HepG2 (cell line): ENCODE measurements at regions of chr9 and their contacts with region 1.

Region 1: GRCh38 chr9:132026932-132027585 is 52.6 kb downstream of the MED27 start:
- DNase-seq: no peak
- ATAC-seq: no peak
- H3K4me3 ChIP-seq: no peak overlapping the region
- H3K27ac ChIP-seq: no peak overlapping the region
- H3K4me1 ChIP-seq: peaks cover under 1% of the 10 kb centered on the region; the same call in 1 of the 2 replicates
- H3K27me3 ChIP-seq: no peaks in the 10 kb centered on the region
- CTCF ChIP-seq: no peak
- EP300 ChIP-seq: no peak
- POLR2A ChIP-seq: no peak
- RAD21 ChIP-seq: no peak

Region 2: GRCh38 chr9:131960871-131961495 is 66.1 kb before region 1 on chr9:
- CTCF ChIA-PET with region 1: no interaction called
- POLR2A ChIA-PET with region 1: no interaction called
- in situ Hi-C with region 1: loop called (anchors 10 kb)
- intact Hi-C with region 1: no loop called
- DNase-seq: no peak
- ATAC-seq: no peak
- H3K4me3 ChIP-seq: no peak overlapping the region
- H3K27ac ChIP-seq: no peak overlapping the region
- H3K4me1 ChIP-seq: no peaks in the 10 kb centered on the region
- H3K27me3 ChIP-seq: no peaks in the 10 kb centered on the region
- CTCF ChIP-seq: no peak
- EP300 ChIP-seq: no peak
- POLR2A ChIP-seq: no peak
- RAD21 ChIP-seq: no peak